ENCODE measurements at regions of chr11 and their contacts with region 1.

Region 1: GRCh38 chr11:117205211-117205818 is 6.1 kb downstream of the TAGLN start:
- DNase-seq: no peak
- H3K4me3 ChIP-seq: no peak overlapping the region
- H3K27ac ChIP-seq: no peak overlapping the region
- H3K4me1 ChIP-seq: no peaks in the 10 kb centered on the region
- H3K27me3 ChIP-seq: no peaks in the 10 kb centered on the region
- CTCF ChIP-seq: no peak
- POLR2A ChIP-seq: no peak

Region 2: GRCh38 chr11:117134431-117134830 is 70.9 kb before region 1 on chr11:
- CTCF ChIA-PET with region 1: no interaction called
- POLR2A ChIA-PET with region 1: no interaction called
- dilution Hi-C with region 1: no loop called
- intact Hi-C with region 1: loop called (anchors 5 kb)
- DNase-seq: no peak
- H3K4me3 ChIP-seq: no peak overlapping the region
- H3K27ac ChIP-seq: no peak overlapping the region
- H3K4me1 ChIP-seq: no peaks in the 10 kb centered on the region
- H3K27me3 ChIP-seq: no peaks in the 10 kb centered on the region
- CTCF ChIP-seq: no peak
- POLR2A ChIP-seq: no peak

Region 3: GRCh38 chr11:117366248-117366647 is 160.9 kb after region 1 on chr11:
- CTCF ChIA-PET with region 1: no interaction called
- POLR2A ChIA-PET with region 1: no interaction called
- dilution Hi-C with region 1: no loop called
- intact Hi-C with region 1: no loop called
- DNase-seq: no peak
- H3K4me3 ChIP-seq: no peak overlapping the region
- H3K27ac ChIP-seq: no peak overlapping the region
- H3K4me1 ChIP-seq: no peaks in the 10 kb centered on the region
- H3K27me3 ChIP-seq: no peaks in the 10 kb centered on the region
- CTCF ChIP-seq: no peak
- POLR2A ChIP-seq: no peak